IMR-90 (cell line): ENCODE measurements at regions of chr15 and their contacts with region 1.

Region 1: GRCh38 chr15:57720867-57721266 is 14.4 kb downstream of the POLR2M start:
- DNase-seq: peak; percentile 18
- ATAC-seq: no peak
- H3K4me3 ChIP-seq: no peak overlapping the region
- H3K27ac ChIP-seq: no peak overlapping the region
- H3K4me1 ChIP-seq: no peaks in the 10 kb centered on the region
- H3K27me3 ChIP-seq: no peaks in the 10 kb centered on the region
- CTCF ChIP-seq: no peak
- POLR2A ChIP-seq: no peak
- RAD21 ChIP-seq: no peak

Region 2: DNA sequence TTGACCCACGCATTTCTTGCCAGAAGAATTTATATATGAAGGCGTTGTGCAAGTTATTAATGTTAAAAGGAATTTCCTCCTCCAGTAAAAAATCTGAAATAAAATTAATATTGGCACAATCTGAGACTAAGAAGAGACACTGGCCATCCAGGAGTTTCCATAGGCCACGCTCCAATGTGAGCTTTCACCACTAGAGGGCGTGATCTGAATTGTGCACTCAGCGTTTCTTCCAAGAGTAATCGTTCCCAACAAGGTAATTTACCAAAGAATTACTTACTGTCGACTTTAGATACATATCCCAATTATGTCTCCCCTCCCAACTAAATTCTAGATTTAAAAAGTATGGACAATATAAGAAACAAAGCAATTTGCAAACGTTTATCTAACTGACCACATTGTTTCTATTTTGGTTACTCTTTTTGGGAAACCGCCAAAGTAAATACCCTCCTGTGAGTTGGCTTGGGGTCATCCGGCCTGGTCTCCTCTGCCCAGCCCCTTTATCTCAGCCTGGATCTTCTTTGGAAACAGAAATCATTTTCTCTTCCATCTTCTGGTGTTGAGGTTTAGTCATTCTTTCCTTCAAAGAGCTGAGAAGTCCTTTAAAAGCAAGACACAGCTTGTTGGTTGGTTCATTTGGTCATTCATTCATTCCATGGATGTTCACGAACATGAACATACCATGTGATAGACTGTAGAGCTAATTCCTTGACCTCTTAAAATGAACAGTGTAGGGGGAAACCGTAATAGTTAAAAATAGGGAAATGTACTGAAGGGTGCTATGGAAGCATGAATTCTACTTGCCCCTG is 11.9 kb after region 1 on chr15:
- CTCF ChIA-PET with region 1: interaction called, 10 read pairs
- POLR2A ChIA-PET with region 1: no interaction called
- dilution Hi-C with region 1: no loop called
- in situ Hi-C with region 1: no loop called
- intact Hi-C with region 1: no loop called
- DNase-seq: peak; percentile 50
- ATAC-seq: peak; percentile 74
- H3K4me3 ChIP-seq: no peak overlapping the region
- H3K27ac ChIP-seq: no peak overlapping the region
- H3K4me1 ChIP-seq: no peaks in the 10 kb centered on the region
- H3K27me3 ChIP-seq: no peaks in the 10 kb centered on the region
- CTCF ChIP-seq: peak; percentile 66
- POLR2A ChIP-seq: no peak
- RAD21 ChIP-seq: peak; percentile 38; the same call in 1 of the 2 replicates